Activated CD4-positive, alpha-beta memory T cell treated with anti-CD3 and anti-CD28 coated beads, Interleukin-2, amount 10 ng/mL, durations not matched to agents 7 days and 5 days (primary cell): ENCODE measurements at regions of chr7 and their contacts with region 1.

Region 1: GRCh38 chr7:43582503-43583423 is at the start of gene STK17A:
- DNase-seq: peak; percentile 96
- H3K4me3 Mint-ChIP-seq: peak within 1 kb of the TSS; percentile 100
- H3K27ac Mint-ChIP-seq: peak within 1 kb of the TSS; percentile 100
- H3K4me1 Mint-ChIP-seq: peaks cover 31% of the 10 kb centered on the region
- H3K27me3 Mint-ChIP-seq: peaks cover 19% of the 10 kb centered on the region
- total RNA-seq, gene STK17A: 89.5 to 90.3 TPM

Region 2: GRCh38 chr7:43559171-43559936 is 23.4 kb before region 1 on chr7:
- CTCF ChIA-PET with region 1: interaction called, 14 read pairs
- POLR2A ChIA-PET with region 1: interaction called, 3 read pairs
- DNase-seq: no peak
- H3K4me3 Mint-ChIP-seq: no peak overlapping the region
- H3K27ac Mint-ChIP-seq: no peak overlapping the region
- H3K4me1 Mint-ChIP-seq: peaks cover 5% of the 10 kb centered on the region
- H3K27me3 Mint-ChIP-seq: peaks cover 48% of the 10 kb centered on the region

Region 3: GRCh38 chr7:43612599-43613589 is 30.1 kb after region 1 on chr7:
- CTCF ChIA-PET with region 1: interaction called, 23 read pairs
- POLR2A ChIA-PET with region 1: interaction called, 18 read pairs
- DNase-seq: no peak
- H3K4me3 Mint-ChIP-seq: no peak overlapping the region
- H3K27ac Mint-ChIP-seq: peak overlapping the region; percentile 79
- H3K4me1 Mint-ChIP-seq: peaks cover 46% of the 10 kb centered on the region
- H3K27me3 Mint-ChIP-seq: no peaks in the 10 kb centered on the region

Region 4: DNA sequence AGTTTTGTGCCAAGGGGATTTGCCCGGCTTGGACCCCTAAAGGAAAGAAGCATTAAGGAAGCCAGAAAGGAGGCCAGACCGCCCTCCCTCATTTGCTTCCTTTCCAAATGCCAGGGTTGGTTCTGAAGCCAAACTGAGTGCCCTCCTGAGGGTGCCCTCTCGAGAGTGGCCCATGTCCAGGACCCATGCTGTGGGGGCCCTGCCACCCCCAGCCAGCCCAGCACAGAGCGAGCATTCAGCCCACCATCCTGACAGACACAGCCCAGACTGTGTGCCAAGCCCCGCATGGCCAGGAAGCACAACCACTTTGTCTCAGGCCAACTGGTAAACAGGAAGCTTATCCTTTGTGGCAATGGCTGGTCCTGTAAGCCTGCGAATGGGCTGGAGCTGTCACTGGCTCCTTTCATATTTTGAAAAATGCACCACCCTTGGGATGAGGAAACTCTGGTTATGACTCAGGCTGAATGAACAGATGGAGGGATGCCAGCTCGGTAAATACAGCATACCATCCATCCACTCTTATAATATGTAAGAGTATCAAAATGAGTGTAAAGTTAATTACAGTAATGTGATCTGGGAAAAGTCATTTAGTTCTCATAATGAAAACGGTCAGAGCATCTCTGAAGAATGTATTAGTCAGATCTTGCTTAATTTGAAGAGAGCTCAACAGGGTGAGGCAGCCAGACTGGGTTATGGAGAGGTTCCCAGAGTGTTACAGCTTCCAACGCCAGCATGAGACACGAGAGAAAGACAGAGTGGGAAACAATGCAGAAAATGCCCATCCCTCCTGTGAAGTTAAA is 65.1 kb after region 1 on chr7:
- CTCF ChIA-PET with region 1: interaction called, 115 read pairs
- POLR2A ChIA-PET with region 1: interaction called, 304 read pairs
- DNase-seq: peak; percentile 57
- H3K4me3 Mint-ChIP-seq: peak overlapping the region; percentile 73
- H3K27ac Mint-ChIP-seq: peak overlapping the region; percentile 98
- H3K4me1 Mint-ChIP-seq: peaks cover 93% of the 10 kb centered on the region
- H3K27me3 Mint-ChIP-seq: no peaks in the 10 kb centered on the region

Region 5: GRCh38 chr7:43679210-43680068 is 96.7 kb after region 1 on chr7:
- CTCF ChIA-PET with region 1: interaction called, 16 read pairs
- POLR2A ChIA-PET with region 1: interaction called, 5 read pairs
- DNase-seq: no peak
- H3K4me3 Mint-ChIP-seq: no peak overlapping the region
- H3K27ac Mint-ChIP-seq: no peak overlapping the region
- H3K4me1 Mint-ChIP-seq: peaks cover 37% of the 10 kb centered on the region
- H3K27me3 Mint-ChIP-seq: no peaks in the 10 kb centered on the region

Region 6: GRCh38 chr7:43700059-43700501 is 117.3 kb after region 1 on chr7:
- CTCF ChIA-PET with region 1: interaction called, 452 read pairs
- POLR2A ChIA-PET with region 1: interaction called, 166 read pairs
- DNase-seq: no peak
- H3K4me3 Mint-ChIP-seq: no peak overlapping the region
- H3K27ac Mint-ChIP-seq: no peak overlapping the region
- H3K4me1 Mint-ChIP-seq: peaks cover 56% of the 10 kb centered on the region
- H3K27me3 Mint-ChIP-seq: no peaks in the 10 kb centered on the region

Region 7: GRCh38 chr7:43758029-43758821 is 175.5 kb after region 1 on chr7 and contains the start of gene BLVRA:
- CTCF ChIA-PET with region 1: interaction called, 13 read pairs
- POLR2A ChIA-PET with region 1: interaction called, 6 read pairs
- DNase-seq: peak; percentile 73
- H3K4me3 Mint-ChIP-seq: peak within 1 kb of the TSS; percentile 80
- H3K27ac Mint-ChIP-seq: peak within 1 kb of the TSS; percentile 61
- H3K4me1 Mint-ChIP-seq: peaks cover 47% of the 10 kb centered on the region
- H3K27me3 Mint-ChIP-seq: peaks cover 10% of the 10 kb centered on the region
- total RNA-seq, gene BLVRA: 38.1 to 42.4 TPM